ENCODE measurements at regions of chr3 and their contacts with region 1.

Region 1: DNA sequence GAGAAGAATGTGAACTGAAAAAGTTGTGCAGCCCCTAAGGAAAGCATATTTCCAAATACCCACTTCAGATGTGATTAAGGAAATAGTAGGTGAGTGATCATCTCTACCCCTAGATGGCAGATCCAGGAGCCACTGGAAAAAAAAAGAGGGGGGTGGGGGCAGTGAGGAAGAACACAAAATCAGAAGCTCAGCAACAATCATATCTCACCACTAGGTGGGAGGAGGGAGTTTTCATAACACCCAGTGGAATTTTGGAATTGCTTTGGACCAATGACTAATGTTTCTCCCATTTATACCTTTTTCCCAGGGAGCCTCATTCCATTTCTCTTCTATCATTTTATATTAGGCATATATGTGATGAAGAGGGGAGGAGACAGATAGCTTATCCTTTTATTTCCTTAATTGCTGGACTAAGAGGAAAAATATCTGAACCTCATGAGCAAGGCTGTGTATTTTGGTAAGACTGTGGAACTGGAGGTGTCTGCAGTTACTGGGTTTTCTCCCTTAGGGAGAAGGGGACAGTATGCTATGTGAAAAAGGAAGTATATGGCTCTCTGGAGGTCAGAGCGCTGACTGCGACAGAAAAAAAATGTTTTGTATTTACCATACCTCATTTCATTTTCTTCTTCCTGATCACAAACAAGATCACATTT is 363.4 kb downstream of the GAP43 start:
- DNase-seq: no peak
- H3K4me3 ChIP-seq: no peak overlapping the region
- H3K27ac ChIP-seq: no peak overlapping the region
- H3K4me1 ChIP-seq: peaks cover 0 to 13% (median 7%) of the 10 kb centered on the region in 4 experiments; a peak in 3 of 7 replicates
- H3K27me3 ChIP-seq: no peaks in the 10 kb centered on the region
- CTCF ChIP-seq: peak in 2 of 3 experiments; percentile 64 to 81; a peak in 3 of 4 replicates
- EP300 ChIP-seq: no peak
- POLR2A ChIP-seq: no peak
- RAD21 ChIP-seq: peak; percentile 64 to 67

Region 2: GRCh38 chr3:115843206-115843605 is 143.5 kb before region 1 on chr3:
- CTCF ChIA-PET with region 1: no interaction called
- POLR2A ChIA-PET with region 1: no interaction called
- DNase-seq: no peak
- H3K4me3 ChIP-seq: no peak overlapping the region
- H3K27ac ChIP-seq: no peak overlapping the region
- H3K4me1 ChIP-seq: peaks cover 0 to 6% (median 3%) of the 10 kb centered on the region in 4 experiments; a peak in 1 of 7 replicates
- H3K27me3 ChIP-seq: no peaks in the 10 kb centered on the region
- CTCF ChIP-seq: no peak
- EP300 ChIP-seq: no peak
- POLR2A ChIP-seq: no peak
- RAD21 ChIP-seq: no peak

Region 3: GRCh38 chr3:115960799-115961198 is 25.9 kb before region 1 on chr3:
- CTCF ChIA-PET with region 1: interaction called, 17 read pairs
- POLR2A ChIA-PET with region 1: no interaction called
- DNase-seq: no peak
- H3K4me3 ChIP-seq: no peak overlapping the region
- H3K27ac ChIP-seq: no peak overlapping the region
- H3K4me1 ChIP-seq: no peaks in the 10 kb centered on the region
- H3K27me3 ChIP-seq: no peaks in the 10 kb centered on the region
- CTCF ChIP-seq: no peak
- EP300 ChIP-seq: no peak
- POLR2A ChIP-seq: no peak
- RAD21 ChIP-seq: no peak

Region 4: GRCh38 chr3:116000311-116000710 is 13.6 kb after region 1 on chr3:
- CTCF ChIA-PET with region 1: interaction called, 30 read pairs
- POLR2A ChIA-PET with region 1: no interaction called
- DNase-seq: no peak
- H3K4me3 ChIP-seq: no peak overlapping the region
- H3K27ac ChIP-seq: no peak overlapping the region
- H3K4me1 ChIP-seq: peaks cover 0 to 6% (median 0%) of the 10 kb centered on the region in 4 experiments; a peak in 3 of 7 replicates
- H3K27me3 ChIP-seq: no peaks in the 10 kb centered on the region
- CTCF ChIP-seq: no peak
- EP300 ChIP-seq: no peak
- POLR2A ChIP-seq: no peak
- RAD21 ChIP-seq: no peak

Measured in H1 (cell line).